ENCODE measurements at regions of chr7 and their contacts with region 1.

Region 1: GRCh38 chr7:87219545-87220025 is at the start of gene TMEM243:
- DNase-seq: peak; percentile 62 to 77
- H3K4me3 ChIP-seq: peak within 1 kb of the TSS; percentile 87 to 97 (median 95)
- H3K27ac ChIP-seq: peak within 1 kb of the TSS; percentile 89 to 94
- H3K4me1 ChIP-seq: peaks cover 3 to 7% of the 10 kb centered on the region in 2 donors
- H3K27me3 ChIP-seq: no peaks in the 10 kb centered on the region
- CTCF ChIP-seq: no peak
- POLR2A ChIP-seq: peak; percentile 58
- total RNA-seq, gene TMEM243: 46.9 to 58.7 (median 50.8) TPM

Region 2: GRCh38 chr7:87151729-87152106 is 67.9 kb before region 1 on chr7:
- intact Hi-C with region 1: loop called (anchors 2 kb)
- DNase-seq: no peak
- H3K4me3 ChIP-seq: peak overlapping the region; percentile 70 to 95 (median 77)
- H3K27ac ChIP-seq: peak overlapping the region; percentile 97 to 99
- H3K4me1 ChIP-seq: peaks cover 0 to 14% of the 10 kb centered on the region in 2 donors
- H3K27me3 ChIP-seq: no peaks in the 10 kb centered on the region
- CTCF ChIP-seq: no peak
- POLR2A ChIP-seq: no peak

Region 3: GRCh38 chr7:87188930-87189329 is 30.7 kb before region 1 on chr7:
- intact Hi-C with region 1: no loop called
- DNase-seq: no peak
- H3K4me3 ChIP-seq: no peak overlapping the region
- H3K27ac ChIP-seq: no peak overlapping the region
- H3K4me1 ChIP-seq: no peaks in the 10 kb centered on the region
- H3K27me3 ChIP-seq: no peaks in the 10 kb centered on the region
- CTCF ChIP-seq: no peak
- POLR2A ChIP-seq: no peak

Measured in breast epithelium (tissue), 4 donors.